Left colon (tissue), 2 donors: ENCODE measurements at regions of chr1 and their contacts with region 1.

Region 1: GRCh38 chr1:168342572-168343280 is 62.0 kb downstream of the TBX19 start:
- DNase-seq: peak; percentile 83 to 88
- ATAC-seq: peak; percentile 99

Region 2: GRCh38 chr1:168439456-168440375 is 97.0 kb after region 1 on chr1:
- intact Hi-C with region 1: loop called in 1 of 2 experiments (anchors 10 kb)
- DNase-seq: peak; percentile 61 to 81
- ATAC-seq: peak; percentile 87

Region 3: DNA sequence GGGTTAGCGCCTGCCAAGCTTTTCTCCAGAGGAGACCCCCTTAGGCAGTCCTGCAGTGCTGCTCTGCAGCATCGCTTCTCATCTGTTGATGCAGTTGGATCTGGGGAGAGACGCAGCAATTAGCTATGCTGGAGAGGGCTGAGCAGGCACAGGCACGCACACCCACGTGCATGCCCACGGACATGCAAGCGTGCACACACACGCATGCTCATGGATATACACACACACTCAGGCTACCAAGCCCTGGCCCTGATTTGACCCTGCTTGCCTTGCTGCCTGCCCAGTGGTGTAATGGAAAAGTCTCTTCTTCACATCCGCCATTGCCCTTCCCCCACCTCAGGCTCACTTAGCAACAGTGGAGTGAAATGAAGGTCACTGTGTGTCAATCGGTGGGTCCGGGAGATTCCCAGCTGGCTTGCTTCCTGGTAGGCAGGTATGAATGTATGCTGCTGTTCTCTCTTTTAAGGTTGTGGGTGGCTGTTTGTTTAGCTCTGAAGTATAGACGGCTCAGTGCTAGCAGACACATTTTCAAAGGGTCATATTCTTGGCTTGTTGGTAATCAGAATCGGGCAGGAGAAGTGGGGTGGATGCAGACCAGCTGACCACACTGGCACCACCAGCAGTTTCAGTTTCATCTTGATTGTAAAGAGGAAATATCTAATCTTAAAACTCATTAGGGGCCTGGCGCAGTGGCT is 773.3 kb after region 1 on chr1:
- intact Hi-C with region 1: loop called in 1 of 2 experiments (anchors 10 kb)
- DNase-seq: peak; percentile 83 to 87
- ATAC-seq: peak; percentile 58